GM10248 (cell line): ENCODE measurements at regions of chr7 and their contacts with region 1.

Region 1: GRCh38 chr7:24812310-24812945 is 55.2 kb upstream of the GSDME start:
- DNase-seq: peak; percentile 58
- CTCF ChIP-seq: peak; percentile 81

Region 2: GRCh38 chr7:24601600-24601999 is 210.8 kb before region 1 on chr7:
- CTCF ChIA-PET with region 1: no interaction called
- POLR2A ChIA-PET with region 1: no interaction called
- DNase-seq: no peak
- CTCF ChIP-seq: no peak

Region 3: DNA sequence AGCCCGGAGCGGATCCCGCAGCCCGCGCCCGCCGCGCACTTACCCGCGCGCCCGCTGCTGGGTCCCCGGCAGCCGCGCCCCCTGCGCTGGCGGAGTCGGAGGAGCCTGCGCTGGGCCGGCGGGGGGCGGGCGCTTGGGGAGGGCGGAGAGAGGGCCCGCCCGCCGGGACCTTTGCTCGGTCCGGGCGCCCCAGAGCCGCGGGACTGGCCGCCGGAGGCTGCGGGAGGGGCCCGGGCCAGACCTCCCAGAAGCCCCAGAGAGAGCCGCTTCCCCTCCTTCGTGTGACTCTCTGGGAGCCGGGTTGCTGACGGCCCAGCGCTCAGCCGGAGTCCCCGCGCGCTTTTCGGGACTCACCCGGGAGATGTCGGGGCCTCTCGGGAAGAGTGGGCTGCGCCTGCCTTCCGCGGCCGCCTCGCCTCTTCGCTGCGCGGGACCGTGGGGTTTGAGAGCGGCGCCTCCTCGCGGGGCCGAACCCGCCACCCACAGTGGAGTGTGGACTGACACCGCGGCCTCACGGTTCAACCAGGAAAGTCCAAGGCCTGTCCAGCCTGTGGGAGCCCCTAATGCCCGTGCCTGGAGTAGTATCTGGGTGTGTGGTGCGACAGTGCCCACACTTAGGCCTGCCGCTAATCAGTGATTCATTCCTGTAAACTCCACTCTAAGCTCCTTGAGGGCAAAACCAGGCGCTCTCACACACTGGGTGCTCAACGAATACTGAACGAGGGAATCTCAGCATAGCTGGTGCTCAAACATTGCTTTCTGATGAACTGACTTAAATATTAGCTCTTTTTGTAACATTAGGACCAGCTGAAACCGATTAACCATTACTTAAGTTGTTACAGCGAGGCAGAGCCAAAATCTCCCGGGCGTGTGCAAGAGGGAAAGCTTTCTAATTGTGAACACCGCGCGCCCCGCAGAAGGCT is 54.8 kb before region 1 on chr7 and contains the start of gene GSDME:
- CTCF ChIA-PET with region 1: interaction called, 17 read pairs
- POLR2A ChIA-PET with region 1: interaction called, 10 read pairs
- DNase-seq: peak; percentile 87
- CTCF ChIP-seq: peak; percentile 25

Region 4: GRCh38 chr7:24773646-24774045 is 38.8 kb before region 1 on chr7:
- CTCF ChIA-PET with region 1: interaction called, 17 read pairs
- POLR2A ChIA-PET with region 1: interaction called, 3 read pairs
- DNase-seq: no peak
- CTCF ChIP-seq: no peak

Region 5: GRCh38 chr7:24800667-24801066 is 11.8 kb before region 1 on chr7:
- CTCF ChIA-PET with region 1: interaction called, 28 read pairs
- POLR2A ChIA-PET with region 1: no interaction called
- DNase-seq: no peak
- CTCF ChIP-seq: no peak

Region 6: DNA sequence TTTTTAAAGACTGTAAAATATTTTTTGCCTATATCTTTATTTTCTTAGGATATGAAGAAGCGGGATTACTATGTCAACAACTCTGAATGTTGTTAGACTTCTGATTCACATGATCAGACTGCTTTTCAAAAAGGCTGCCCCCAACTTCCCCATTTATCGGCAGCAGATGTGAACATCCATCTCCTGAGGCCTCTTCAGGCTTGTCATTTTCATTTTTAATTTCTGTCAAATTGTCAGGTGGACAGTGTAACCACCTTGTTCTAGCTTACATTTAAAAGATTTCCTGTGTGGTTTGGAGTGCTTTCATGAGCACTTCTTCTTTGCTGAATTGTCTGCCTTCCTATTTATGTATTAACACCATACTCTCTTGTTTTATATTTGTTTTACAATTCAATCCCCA is 23.7 kb after region 1 on chr7:
- CTCF ChIA-PET with region 1: interaction called, 23 read pairs
- POLR2A ChIA-PET with region 1: no interaction called
- DNase-seq: peak; percentile 42
- CTCF ChIP-seq: no peak

Region 7: DNA sequence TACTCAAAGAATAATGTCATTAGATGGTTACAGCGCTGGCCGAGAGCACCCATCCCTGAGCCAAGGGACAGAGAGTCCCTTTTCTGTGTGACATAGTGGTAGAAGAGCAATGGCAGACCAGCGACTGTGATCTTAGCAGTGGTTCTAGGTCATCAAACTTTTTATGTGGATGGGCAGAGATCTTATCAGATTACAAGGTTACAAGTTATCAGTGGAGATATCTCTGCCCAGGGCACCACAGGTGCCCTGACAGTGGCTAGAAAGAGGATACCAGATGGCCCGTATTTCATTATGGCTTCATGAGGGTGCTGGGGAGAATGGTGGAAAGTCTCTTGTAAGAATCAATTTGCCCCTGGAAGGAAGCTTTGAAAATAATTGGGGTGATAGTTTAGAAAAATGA is 250.0 kb after region 1 on chr7:
- CTCF ChIA-PET with region 1: interaction called, 12 read pairs
- POLR2A ChIA-PET with region 1: no interaction called
- DNase-seq: no peak
- CTCF ChIP-seq: no peak

Region 8: DNA sequence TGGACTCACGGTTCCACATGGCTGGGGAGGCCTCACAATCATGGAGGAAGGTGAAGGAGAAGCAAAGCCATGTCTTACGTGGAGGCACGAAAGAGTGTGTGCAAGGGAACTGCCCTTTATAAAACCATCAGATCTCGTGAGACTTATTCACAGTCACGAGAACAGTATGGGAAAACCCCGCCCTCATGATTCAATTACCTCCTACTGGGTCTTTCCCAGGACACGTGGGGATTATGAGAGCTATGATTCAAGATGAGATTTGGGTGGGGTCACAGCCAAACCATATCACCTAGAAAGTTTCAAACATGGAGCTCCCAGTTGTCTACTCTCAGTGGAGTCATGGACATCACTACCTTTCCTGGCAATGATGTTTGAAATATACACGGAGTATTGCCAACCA is 263.0 kb after region 1 on chr7:
- CTCF ChIA-PET with region 1: interaction called, 72 read pairs
- POLR2A ChIA-PET with region 1: no interaction called
- DNase-seq: no peak
- CTCF ChIP-seq: no peak